Endothelial cell of umbilical vein (primary cell): ENCODE measurements at regions of chr6 and their contacts with region 1.

Region 1: DNA sequence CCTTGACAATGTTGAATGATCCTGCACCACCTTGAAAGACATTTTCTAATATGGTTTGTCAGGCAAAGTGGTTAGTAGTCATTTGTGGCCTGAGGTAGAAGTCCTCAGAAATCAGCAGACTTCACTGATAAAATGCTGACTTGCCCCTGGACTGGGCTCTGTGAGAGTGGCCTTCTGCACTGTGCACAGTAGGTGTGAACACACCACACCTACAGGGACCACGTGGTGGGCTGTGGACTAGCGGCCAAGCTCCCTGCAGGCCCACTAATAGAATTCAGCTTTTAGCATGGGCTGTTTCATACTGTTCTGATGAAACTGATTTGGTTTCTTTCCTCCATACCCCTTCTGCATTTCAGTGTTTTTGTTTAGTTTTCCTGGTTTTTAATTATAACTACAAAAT is 7.3 kb downstream of the BPHL start:
- DNase-seq: no peak
- H3K4me3 ChIP-seq: no peak overlapping the region
- H3K27ac ChIP-seq: no peak overlapping the region
- H3K4me1 ChIP-seq: no peaks in the 10 kb centered on the region
- H3K27me3 ChIP-seq: no peaks in the 10 kb centered on the region
- CTCF ChIP-seq: no peak
- POLR2A ChIP-seq: no peak

Region 2: GRCh38 chr6:2186516-2186915 is 939.3 kb before region 1 on chr6:
- CTCF ChIA-PET with region 1: no interaction called
- POLR2A ChIA-PET with region 1: no interaction called
- dilution Hi-C with region 1: no loop called
- intact Hi-C with region 1: no loop called
- DNase-seq: no peak
- H3K4me3 ChIP-seq: no peak overlapping the region
- H3K27ac ChIP-seq: no peak overlapping the region
- H3K4me1 ChIP-seq: peaks cover 9% of the 10 kb centered on the region
- H3K27me3 ChIP-seq: no peaks in the 10 kb centered on the region
- CTCF ChIP-seq: no peak
- POLR2A ChIP-seq: no peak

Region 3: DNA sequence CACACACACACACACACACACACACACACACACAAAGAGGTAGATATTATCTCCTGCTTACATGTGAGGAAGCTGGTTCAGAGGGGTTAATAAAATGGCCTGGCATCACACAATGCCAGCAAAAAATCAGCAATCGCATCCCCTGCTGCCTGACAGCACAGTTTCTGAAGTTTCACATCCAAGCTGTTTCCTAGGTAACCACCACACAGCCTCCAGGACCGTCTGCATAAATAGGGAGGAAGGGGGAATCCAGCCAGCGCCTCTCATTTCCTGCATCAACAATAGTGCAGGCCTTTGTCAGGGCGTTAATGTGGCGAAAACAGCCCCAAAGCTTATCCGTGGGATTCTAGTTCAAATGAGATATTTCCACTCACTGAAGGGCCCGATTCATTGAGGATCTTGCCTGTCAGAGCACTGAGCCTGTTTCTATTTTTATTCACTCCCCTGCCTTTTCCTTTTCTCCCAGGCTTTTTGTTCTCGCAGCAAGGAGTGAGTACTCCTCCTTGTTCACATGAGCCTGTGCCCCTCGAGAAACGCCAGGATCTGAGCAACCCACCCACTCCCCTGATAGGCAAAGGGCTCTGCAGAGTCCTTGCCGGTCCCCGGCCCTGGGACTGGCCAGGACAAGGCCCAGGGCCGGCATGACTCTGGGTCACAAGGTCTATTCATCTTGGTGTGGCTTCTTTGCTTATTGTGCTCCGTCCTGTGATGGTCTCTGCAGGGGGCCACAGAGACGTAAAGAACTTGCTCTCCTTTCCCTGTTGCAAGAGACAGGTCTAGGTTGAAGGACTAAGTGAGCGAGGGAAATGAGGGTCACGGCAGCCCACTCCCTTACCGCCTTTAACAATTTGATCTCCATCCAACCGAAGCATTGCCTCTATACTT is 69.0 kb after region 1 on chr6:
- CTCF ChIA-PET with region 1: interaction called, 8 read pairs
- POLR2A ChIA-PET with region 1: no interaction called
- dilution Hi-C with region 1: no loop called
- intact Hi-C with region 1: loop called (anchors 2 kb)
- DNase-seq: peak; percentile 74
- H3K4me3 ChIP-seq: no peak overlapping the region
- H3K27ac ChIP-seq: no peak overlapping the region
- H3K4me1 ChIP-seq: peaks cover 7% of the 10 kb centered on the region
- H3K27me3 ChIP-seq: peaks cover 0 to 2% of the 10 kb centered on the region in 2 experiments
- CTCF ChIP-seq: no peak
- POLR2A ChIP-seq: no peak

Region 4: GRCh38 chr6:3258720-3259490 is 133.1 kb after region 1 on chr6 and contains the start of gene PSMG4:
- CTCF ChIA-PET with region 1: interaction called, 7 read pairs
- POLR2A ChIA-PET with region 1: no interaction called
- dilution Hi-C with region 1: no loop called
- intact Hi-C with region 1: loop called (anchors 2 kb)
- DNase-seq: peak; percentile 84
- H3K4me3 ChIP-seq: peak within 1 kb of the TSS; percentile 36 to 98 (median 41)
- H3K27ac ChIP-seq: peak within 1 kb of the TSS; percentile 10
- H3K4me1 ChIP-seq: peaks cover 7% of the 10 kb centered on the region
- H3K27me3 ChIP-seq: peaks cover 4 to 5% of the 10 kb centered on the region in 2 experiments
- CTCF ChIP-seq: no peak
- POLR2A ChIP-seq: peak; percentile 81
- total RNA-seq, gene PSMG4: 31.1 and 31.4 TPM in 2 replicates

Region 5: GRCh38 chr6:3732345-3733141 is 606.7 kb after region 1 on chr6:
- CTCF ChIA-PET with region 1: no interaction called
- POLR2A ChIA-PET with region 1: no interaction called
- dilution Hi-C with region 1: no loop called
- intact Hi-C with region 1: loop called (anchors 2 kb)
- DNase-seq: peak; percentile 88
- H3K4me3 ChIP-seq: no peak overlapping the region
- H3K27ac ChIP-seq: no peak overlapping the region
- H3K4me1 ChIP-seq: peaks cover 40% of the 10 kb centered on the region
- H3K27me3 ChIP-seq: no peaks in the 10 kb centered on the region
- CTCF ChIP-seq: peak; percentile 79 to 84
- POLR2A ChIP-seq: peak; percentile 22